ENCODE measurements at regions of chr3 and their contacts with region 1.

Region 1: DNA sequence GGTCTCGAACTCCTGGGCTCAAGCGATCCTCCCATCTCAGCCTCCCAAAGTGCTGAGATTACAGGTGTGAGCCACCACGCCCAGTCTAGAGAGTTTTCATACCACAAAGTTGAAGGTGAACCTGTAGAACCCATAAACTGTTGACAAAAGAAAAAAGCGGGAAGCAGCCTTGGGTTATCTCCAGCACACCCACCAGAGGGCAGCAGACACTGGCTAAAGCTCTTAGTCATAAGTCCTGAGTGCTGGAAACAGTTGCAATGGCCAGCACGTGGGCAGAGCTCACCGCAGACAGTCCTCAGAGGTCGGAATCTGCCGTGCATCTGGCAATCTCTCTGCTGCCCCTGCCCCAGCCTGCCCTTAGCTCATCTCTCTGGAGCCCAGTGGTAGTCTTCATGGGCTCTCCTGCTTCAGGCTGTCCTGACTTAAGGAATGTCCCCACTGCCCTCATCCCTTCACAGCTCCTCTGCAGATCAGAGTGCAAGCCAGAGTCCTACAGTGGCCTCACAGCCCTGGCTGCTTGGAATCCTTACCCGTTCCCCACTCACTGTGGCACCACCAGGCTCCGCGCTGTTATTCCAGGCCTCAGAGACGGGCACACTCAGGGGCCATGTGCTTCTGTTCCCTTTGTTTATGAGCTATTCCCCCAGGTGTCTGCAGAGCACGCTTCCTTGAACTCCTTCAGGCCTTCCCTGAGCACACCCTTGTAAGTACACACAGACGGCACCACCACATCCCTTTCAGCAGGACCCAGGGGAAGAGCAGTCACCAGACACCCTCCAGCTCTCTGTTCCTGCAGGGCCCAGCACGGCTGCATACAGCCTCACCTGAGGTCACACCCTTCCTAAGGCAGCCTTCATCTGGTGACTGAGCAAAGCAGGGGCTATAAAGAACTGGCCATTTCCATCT is 8.8 kb upstream of the ELP6 start:
- DNase-seq: peak; percentile 91
- H3K4me3 Mint-ChIP-seq: no peak overlapping the region
- H3K27ac Mint-ChIP-seq: no peak overlapping the region
- H3K4me1 Mint-ChIP-seq: no peaks in the 10 kb centered on the region
- H3K27me3 Mint-ChIP-seq: no peaks in the 10 kb centered on the region

Region 2: GRCh38 chr3:46935168-46935858 is 587.0 kb before region 1 on chr3:
- CTCF ChIA-PET with region 1: no interaction called
- intact Hi-C with region 1: no loop called
- DNase-seq: no peak
- H3K4me3 Mint-ChIP-seq: no peak overlapping the region
- H3K27ac Mint-ChIP-seq: no peak overlapping the region
- H3K4me1 Mint-ChIP-seq: peaks cover 53% of the 10 kb centered on the region
- H3K27me3 Mint-ChIP-seq: no peaks in the 10 kb centered on the region

Region 3: GRCh38 chr3:47035634-47036033 is 486.7 kb before region 1 on chr3:
- CTCF ChIA-PET with region 1: no interaction called
- intact Hi-C with region 1: no loop called
- DNase-seq: no peak
- H3K4me3 Mint-ChIP-seq: no peak overlapping the region
- H3K27ac Mint-ChIP-seq: no peak overlapping the region
- H3K4me1 Mint-ChIP-seq: peaks cover 40% of the 10 kb centered on the region
- H3K27me3 Mint-ChIP-seq: no peaks in the 10 kb centered on the region

Region 4: DNA sequence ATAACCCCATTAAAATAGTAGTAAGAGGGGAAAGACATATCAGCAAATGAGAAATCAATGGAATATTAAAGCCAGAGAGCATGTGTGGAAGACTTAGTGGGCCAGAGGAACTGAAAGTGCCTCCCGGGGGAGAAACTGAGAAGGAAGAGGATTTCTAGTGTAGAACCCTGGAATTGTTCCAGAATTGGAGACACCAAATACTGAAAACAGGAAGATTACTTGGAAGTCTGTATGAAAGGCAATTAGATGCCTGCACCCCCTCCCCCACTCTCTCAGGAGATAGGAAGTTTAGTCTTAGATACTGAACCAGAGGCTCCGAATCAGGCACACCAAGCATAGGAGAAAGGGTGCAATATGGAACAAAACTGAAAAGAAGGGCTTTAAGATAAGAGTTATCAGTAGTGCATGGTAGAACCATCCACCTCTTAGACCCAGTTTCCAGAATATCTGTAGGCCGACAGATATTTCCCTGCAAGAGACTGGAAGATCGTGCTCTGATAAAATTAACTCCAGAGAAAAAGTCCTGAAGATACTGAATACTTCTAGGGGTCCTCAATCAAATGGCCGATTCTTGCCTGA is 207.2 kb before region 1 on chr3:
- CTCF ChIA-PET with region 1: no interaction called
- intact Hi-C with region 1: no loop called
- DNase-seq: no peak
- H3K4me3 Mint-ChIP-seq: no peak overlapping the region
- H3K27ac Mint-ChIP-seq: no peak overlapping the region
- H3K4me1 Mint-ChIP-seq: peaks cover 13% of the 10 kb centered on the region
- H3K27me3 Mint-ChIP-seq: no peaks in the 10 kb centered on the region

Region 5: GRCh38 chr3:47533481-47533880 is 11.1 kb after region 1 on chr3:
- CTCF ChIA-PET with region 1: interaction called, 14 read pairs
- intact Hi-C with region 1: no loop called
- DNase-seq: no peak
- H3K4me3 Mint-ChIP-seq: no peak overlapping the region
- H3K27ac Mint-ChIP-seq: no peak overlapping the region
- H3K4me1 Mint-ChIP-seq: no peaks in the 10 kb centered on the region
- H3K27me3 Mint-ChIP-seq: no peaks in the 10 kb centered on the region

Region 6: GRCh38 chr3:47781685-47782445 is 259.5 kb after region 1 on chr3 and contains the start of gene SMARCC1:
- CTCF ChIA-PET with region 1: interaction called, 29 read pairs
- intact Hi-C with region 1: no loop called
- DNase-seq: peak; percentile 99
- H3K4me3 Mint-ChIP-seq: peak within 1 kb of the TSS; percentile 95
- H3K27ac Mint-ChIP-seq: peak within 1 kb of the TSS; percentile 92
- H3K4me1 Mint-ChIP-seq: peaks cover 21% of the 10 kb centered on the region
- H3K27me3 Mint-ChIP-seq: no peaks in the 10 kb centered on the region
- total RNA-seq, gene SMARCC1: 82.5 to 84.5 TPM

Region 7: GRCh38 chr3:47824541-47825473 is 302.5 kb after region 1 on chr3:
- CTCF ChIA-PET with region 1: interaction called, 22 read pairs
- intact Hi-C with region 1: loop called (anchors 1 kb)
- DNase-seq: peak; percentile 77
- H3K4me3 Mint-ChIP-seq: peak overlapping the region; percentile 86
- H3K27ac Mint-ChIP-seq: peak overlapping the region; percentile 84
- H3K4me1 Mint-ChIP-seq: peaks cover 34% of the 10 kb centered on the region
- H3K27me3 Mint-ChIP-seq: no peaks in the 10 kb centered on the region

Region 8: GRCh38 chr3:48151058-48151806 is 628.9 kb after region 1 on chr3:
- CTCF ChIA-PET with region 1: no interaction called
- intact Hi-C with region 1: loop called (anchors 2 kb)
- DNase-seq: peak; percentile 75
- H3K4me3 Mint-ChIP-seq: no peak overlapping the region
- H3K27ac Mint-ChIP-seq: no peak overlapping the region
- H3K4me1 Mint-ChIP-seq: no peaks in the 10 kb centered on the region
- H3K27me3 Mint-ChIP-seq: no peaks in the 10 kb centered on the region